Sigmoid colon (tissue), 7 donors: ENCODE measurements at regions of chr3 and their contacts with region 1.

Region 1: DNA sequence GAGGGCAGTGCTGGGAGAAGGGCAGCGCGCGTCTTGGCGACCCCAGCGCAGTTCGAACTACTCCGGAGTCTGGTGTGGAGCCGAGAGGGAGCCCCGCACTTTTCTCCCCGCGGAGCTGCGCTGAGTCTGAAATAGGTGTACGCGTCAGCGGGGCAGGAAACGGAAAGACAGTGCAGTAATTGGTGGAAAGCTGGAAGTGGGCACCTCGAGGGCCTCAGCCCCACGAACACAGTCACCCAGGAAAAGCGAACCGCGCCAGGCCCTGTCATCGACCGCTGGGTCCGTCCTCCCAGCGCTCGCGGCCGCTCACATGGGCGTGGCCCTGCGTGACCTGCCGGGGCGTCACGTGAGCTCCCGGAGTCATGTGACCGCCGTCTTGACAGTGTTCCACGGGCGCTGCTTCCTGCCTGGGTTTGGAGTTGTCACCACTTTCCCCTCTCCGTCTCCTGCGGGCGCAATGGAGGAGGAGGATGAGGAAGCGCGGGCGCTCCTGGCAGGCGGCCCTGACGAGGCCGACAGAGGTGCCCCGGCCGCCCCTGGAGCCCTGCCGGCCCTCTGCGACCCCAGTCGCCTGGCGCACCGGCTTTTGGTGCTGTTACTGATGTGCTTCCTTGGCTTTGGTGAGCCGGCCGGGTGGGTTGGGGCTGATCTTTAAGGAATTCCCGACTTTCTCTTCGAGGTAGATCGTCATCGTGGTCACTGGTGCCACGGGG is at the start of gene MFSD1:
- DNase-seq: peak; percentile 98
- H3K4me3 ChIP-seq: peak within 1 kb of the TSS; percentile 78 to 96 (median 90)
- H3K27ac ChIP-seq: peak within 1 kb of the TSS; percentile 79 to 89 (median 84)
- H3K4me1 ChIP-seq: peaks cover 0 to 28% (median 23%) of the 10 kb centered on the region in 4 donors
- H3K27me3 ChIP-seq: no peaks in the 10 kb centered on the region
- CTCF ChIP-seq: no peak
- EP300 ChIP-seq: peak in 2 of 4 donors; percentile 28 to 58
- POLR2A ChIP-seq: peak; percentile 79 to 86
- total RNA-seq, gene MFSD1: 53.9 to 58.5 (median 56.4) TPM

Region 2: GRCh38 chr3:158570999-158571974 is 230.6 kb before region 1 on chr3 and contains the start of gene MLF1:
- intact Hi-C with region 1: loop called (anchors 10 kb)
- DNase-seq: peak; percentile 99
- H3K4me3 ChIP-seq: peak within 1 kb of the TSS; percentile 61 to 73 (median 65)
- H3K27ac ChIP-seq: peak within 1 kb of the TSS; percentile 77 to 82 (median 80)
- H3K4me1 ChIP-seq: peaks cover 0 to 20% (median 11%) of the 10 kb centered on the region in 4 donors
- H3K27me3 ChIP-seq: no peaks in the 10 kb centered on the region
- CTCF ChIP-seq: no peak
- EP300 ChIP-seq: no peak
- POLR2A ChIP-seq: peak; percentile 61 to 72
- total RNA-seq, gene MLF1: 5.0 to 11.8 (median 10.1) TPM

Region 3: GRCh38 chr3:158644345-158644908 is 157.4 kb before region 1 on chr3 and contains the start of gene GFM1:
- intact Hi-C with region 1: loop called (anchors 5 kb)
- DNase-seq: peak; percentile 96
- H3K4me3 ChIP-seq: peak within 1 kb of the TSS; percentile 83 to 90 (median 86)
- H3K27ac ChIP-seq: peak within 1 kb of the TSS; percentile 85 to 90 (median 86)
- H3K4me1 ChIP-seq: peaks cover 0 to 18% (median 14%) of the 10 kb centered on the region in 4 donors
- H3K27me3 ChIP-seq: no peaks in the 10 kb centered on the region
- CTCF ChIP-seq: peak; percentile 59 to 76 (median 62)
- EP300 ChIP-seq: no peak
- POLR2A ChIP-seq: peak; percentile 10 to 55
- total RNA-seq, gene GFM1: 32.7 to 56.2 (median 42.7) TPM

Region 4: GRCh38 chr3:158668506-158668905 is 133.3 kb before region 1 on chr3:
- intact Hi-C with region 1: loop called (anchors 5 kb)
- DNase-seq: no peak
- H3K4me3 ChIP-seq: no peak overlapping the region
- H3K27ac ChIP-seq: no peak overlapping the region
- H3K4me1 ChIP-seq: peaks cover 0 to 18% (median 13%) of the 10 kb centered on the region in 4 donors
- H3K27me3 ChIP-seq: no peaks in the 10 kb centered on the region
- CTCF ChIP-seq: no peak
- EP300 ChIP-seq: no peak
- POLR2A ChIP-seq: no peak

Region 5: DNA sequence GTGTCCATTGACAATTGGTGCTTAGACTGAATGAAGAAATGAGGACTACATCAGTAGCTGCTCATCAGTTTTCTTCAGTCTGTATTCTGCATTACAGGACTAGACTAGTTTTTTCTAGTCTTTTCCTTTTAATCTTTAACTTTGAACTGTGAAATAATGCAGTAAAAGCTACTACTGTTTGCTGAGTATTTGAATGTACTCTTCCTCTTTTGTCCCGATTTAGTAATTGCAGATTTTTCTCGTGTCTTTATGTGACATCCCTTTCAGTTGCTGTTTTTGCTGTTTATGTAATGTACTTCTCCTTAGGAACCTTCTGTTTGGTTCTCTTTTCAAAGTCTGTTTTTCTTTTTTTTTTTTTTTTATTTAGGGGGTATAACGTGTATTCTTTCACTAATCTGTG is 17.4 kb after region 1 on chr3:
- intact Hi-C with region 1: no loop called
- DNase-seq: no peak
- H3K4me3 ChIP-seq: no peak overlapping the region
- H3K27ac ChIP-seq: peak overlapping the region in 1 of 4 donors; percentile 37
- H3K4me1 ChIP-seq: no peaks in the 10 kb centered on the region
- H3K27me3 ChIP-seq: no peaks in the 10 kb centered on the region
- CTCF ChIP-seq: no peak
- EP300 ChIP-seq: no peak
- POLR2A ChIP-seq: no peak